WTC11 (cell line): ENCODE measurements at regions of chr19 and their contacts with region 1.

Region 1: DNA sequence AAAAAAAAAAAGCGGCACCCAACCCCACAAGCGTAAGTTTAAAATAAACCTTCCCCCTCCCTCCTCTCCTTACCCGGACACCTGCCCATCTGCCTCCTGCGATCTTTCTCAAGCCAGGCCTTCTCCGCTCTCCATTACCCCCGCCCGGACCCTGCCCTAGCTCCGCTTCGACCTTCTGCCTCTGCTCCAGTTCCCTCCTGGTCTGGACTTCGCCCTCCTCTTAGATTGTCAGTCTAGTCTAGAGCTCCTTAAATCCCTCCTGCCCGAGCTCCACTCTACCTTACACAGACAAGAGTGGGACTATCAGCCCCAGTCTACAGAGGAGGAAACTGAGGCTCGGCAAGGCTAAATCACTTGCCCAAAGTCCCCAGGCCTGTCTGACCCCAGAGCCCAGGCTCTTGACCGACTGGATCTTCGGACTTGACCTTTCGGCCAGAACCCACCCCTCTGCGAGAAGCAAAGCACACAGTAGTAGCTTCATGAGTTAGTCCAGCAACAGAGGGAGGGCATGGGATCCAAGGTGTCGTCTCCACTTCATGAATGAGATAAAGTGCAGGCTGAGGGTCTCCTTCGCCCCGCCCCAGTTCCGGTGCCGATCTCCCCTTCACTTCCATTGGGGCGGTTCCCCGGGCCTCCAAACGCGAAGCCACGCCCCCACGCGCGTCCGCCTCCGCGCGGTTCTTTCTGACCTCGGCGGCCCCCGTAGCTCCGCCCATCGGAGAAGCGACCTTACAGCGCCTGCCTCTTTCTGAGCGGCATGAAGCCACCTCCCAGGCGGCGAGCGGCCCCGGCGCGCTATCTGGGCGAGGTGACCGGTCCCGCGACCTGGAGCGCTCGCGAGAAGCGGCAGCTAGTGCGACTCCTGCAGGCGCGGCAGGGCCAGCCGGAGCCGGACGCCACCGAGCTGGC is at the start of gene SNAPC2:
- DNase-seq: peak; percentile 98
- ATAC-seq: peak; percentile 50
- H3K4me3 Mint-ChIP-seq: peak within 1 kb of the TSS; percentile 75
- H3K27ac Mint-ChIP-seq: peak within 1 kb of the TSS; percentile 76
- H3K4me1 Mint-ChIP-seq: peaks cover 8% of the 10 kb centered on the region
- H3K27me3 Mint-ChIP-seq: peaks cover 49% of the 10 kb centered on the region
- CTCF ChIP-seq: no peak
- total RNA-seq, gene SNAPC2: 23.2 to 24.3 TPM (median 23.7 TPM) in 3 replicates

Region 2: DNA sequence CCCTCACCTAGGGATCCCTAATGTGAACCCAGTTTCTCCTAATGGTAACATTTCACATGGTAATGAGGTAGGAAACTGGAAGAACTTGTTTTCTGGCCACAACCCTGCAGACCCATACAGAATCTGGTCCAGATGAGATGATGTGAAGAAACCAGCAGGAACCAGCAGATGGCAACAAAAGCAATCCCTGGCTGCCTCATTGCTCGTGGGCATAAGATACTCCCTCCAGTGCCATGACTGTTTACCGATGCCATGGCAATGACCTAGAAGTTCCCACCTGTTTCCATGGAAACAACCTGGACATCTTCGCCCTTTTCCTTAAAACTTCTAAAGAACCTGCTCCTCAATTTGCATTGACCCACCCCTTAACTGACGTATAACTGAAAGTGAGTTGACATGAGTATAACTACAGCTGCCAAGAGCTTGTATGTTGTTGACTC is 171.1 kb before region 1 on chr19:
- CTCF ChIA-PET with region 1: no interaction called
- POLR2A ChIA-PET with region 1: no interaction called
- DNase-seq: peak; percentile 62
- ATAC-seq: peak; percentile 99
- H3K4me3 Mint-ChIP-seq: no peak overlapping the region
- H3K27ac Mint-ChIP-seq: peak overlapping the region; percentile 57; the same call in 1 of the 2 replicates
- H3K4me1 Mint-ChIP-seq: peaks cover 20% of the 10 kb centered on the region
- H3K27me3 Mint-ChIP-seq: peaks cover 4% of the 10 kb centered on the region; the same call in 1 of the 2 replicates
- CTCF ChIP-seq: no peak

Region 3: GRCh38 chr19:7829561-7830271 is 90.1 kb before region 1 on chr19 and contains the start of gene EVI5L:
- CTCF ChIA-PET with region 1: interaction called, 10 read pairs
- POLR2A ChIA-PET with region 1: no interaction called
- DNase-seq: peak; percentile 99
- ATAC-seq: peak; percentile 92
- H3K4me3 Mint-ChIP-seq: peak within 1 kb of the TSS; percentile 91
- H3K27ac Mint-ChIP-seq: no peak within 1 kb of the TSS
- H3K4me1 Mint-ChIP-seq: peaks cover 14% of the 10 kb centered on the region
- H3K27me3 Mint-ChIP-seq: peaks cover 55% of the 10 kb centered on the region
- CTCF ChIP-seq: no peak
- total RNA-seq, gene EVI5L: 10.5 to 13.7 TPM (median 13.6 TPM) in 3 replicates

Region 4: GRCh38 chr19:7852851-7853769 is 66.8 kb before region 1 on chr19:
- CTCF ChIA-PET with region 1: interaction called, 37 read pairs
- POLR2A ChIA-PET with region 1: interaction called, 10 read pairs
- DNase-seq: peak; percentile 96
- ATAC-seq: peak; percentile 86
- H3K4me3 Mint-ChIP-seq: peak overlapping the region; percentile 51
- H3K27ac Mint-ChIP-seq: no peak overlapping the region
- H3K4me1 Mint-ChIP-seq: peaks cover 6% of the 10 kb centered on the region; the same call in 1 of the 2 replicates
- H3K27me3 Mint-ChIP-seq: peaks cover 37% of the 10 kb centered on the region
- CTCF ChIP-seq: peak; percentile 95

Region 5: DNA sequence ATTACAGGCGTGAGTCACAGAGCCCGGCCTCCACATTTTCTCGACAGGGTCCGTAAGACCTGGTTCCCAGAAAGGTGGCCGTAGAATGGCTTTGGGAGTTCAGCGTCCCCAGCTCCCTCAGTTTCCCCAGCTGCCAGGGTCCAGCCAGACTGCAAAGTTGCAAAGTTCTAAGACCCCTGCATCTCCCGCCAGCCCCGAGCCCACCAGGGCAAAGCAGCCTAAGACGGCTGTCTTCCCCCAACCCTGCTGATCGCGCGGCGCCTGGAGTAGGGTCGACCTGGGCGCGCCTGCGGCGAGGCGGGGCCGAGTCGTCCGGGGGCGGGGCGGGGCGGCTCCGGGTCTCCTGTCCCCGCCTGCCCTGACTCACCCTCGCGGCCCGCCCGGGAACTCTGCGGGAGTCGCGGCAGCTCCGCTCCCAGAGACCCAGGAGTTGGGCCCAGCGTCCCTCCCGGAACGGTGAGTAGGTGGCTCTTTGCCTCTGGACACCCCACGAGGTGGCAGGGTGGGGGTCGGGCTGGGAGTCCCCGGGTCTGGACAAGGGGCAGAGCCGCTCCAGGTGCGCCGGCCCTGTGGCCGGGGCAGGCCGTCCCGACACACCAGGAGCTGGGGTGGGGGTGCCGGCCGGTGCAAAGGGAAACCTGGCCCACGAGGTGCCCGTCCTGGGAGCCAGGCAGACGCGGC is 31.6 kb before region 1 on chr19 and contains the start of gene LRRC8E:
- CTCF ChIA-PET with region 1: interaction called, 14 read pairs
- POLR2A ChIA-PET with region 1: no interaction called
- DNase-seq: peak; percentile 87
- ATAC-seq: peak; percentile 97
- H3K4me3 Mint-ChIP-seq: peak within 1 kb of the TSS; percentile 65
- H3K27ac Mint-ChIP-seq: no peak within 1 kb of the TSS
- H3K4me1 Mint-ChIP-seq: peaks cover 3% of the 10 kb centered on the region
- H3K27me3 Mint-ChIP-seq: peaks cover 56% of the 10 kb centered on the region
- CTCF ChIP-seq: no peak
- total RNA-seq, gene LRRC8E: 3.0 to 3.6 TPM (median 3.1 TPM) in 3 replicates

Region 6: GRCh38 chr19:7903244-7904073 is 16.4 kb before region 1 on chr19 and contains the start of gene MAP2K7:
- CTCF ChIA-PET with region 1: interaction called, 70 read pairs
- POLR2A ChIA-PET with region 1: interaction called, 5 read pairs
- DNase-seq: peak; percentile 100
- ATAC-seq: peak; percentile 87
- H3K4me3 Mint-ChIP-seq: peak within 1 kb of the TSS; percentile 90
- H3K27ac Mint-ChIP-seq: peak within 1 kb of the TSS; percentile 97
- H3K4me1 Mint-ChIP-seq: peaks cover 20% of the 10 kb centered on the region
- H3K27me3 Mint-ChIP-seq: peaks cover 13% of the 10 kb centered on the region
- CTCF ChIP-seq: no peak
- total RNA-seq, gene MAP2K7: 39.4 to 46.9 TPM (median 46.3 TPM) in 3 replicates

Region 7: GRCh38 chr19:7908742-7909461 is 11.0 kb before region 1 on chr19:
- CTCF ChIA-PET with region 1: interaction called, 70 read pairs
- POLR2A ChIA-PET with region 1: interaction called, 4 read pairs
- DNase-seq: no peak
- ATAC-seq: peak; percentile 47
- H3K4me3 Mint-ChIP-seq: no peak overlapping the region
- H3K27ac Mint-ChIP-seq: no peak overlapping the region
- H3K4me1 Mint-ChIP-seq: peaks cover 12% of the 10 kb centered on the region
- H3K27me3 Mint-ChIP-seq: no peaks in the 10 kb centered on the region; the same call in 1 of the 2 replicates
- CTCF ChIP-seq: no peak